HepG2 (cell line): ENCODE measurements at regions of chr11 and their contacts with region 1.

Region 1: GRCh38 chr11:68206187-68206601 is 6.9 kb downstream of the KMT5B start:
- DNase-seq: peak; percentile 74
- ATAC-seq: peak; percentile 36
- H3K4me3 ChIP-seq: no peak overlapping the region
- H3K27ac ChIP-seq: no peak overlapping the region
- H3K4me1 ChIP-seq: peaks cover 79% of the 10 kb centered on the region
- H3K27me3 ChIP-seq: no peaks in the 10 kb centered on the region
- CTCF ChIP-seq: peak; percentile 82
- EP300 ChIP-seq: no peak
- POLR2A ChIP-seq: no peak
- RAD21 ChIP-seq: 0 out of 2 replicates have a peak, but pooled peaks have one; percentile 25

Region 2: GRCh38 chr11:68076371-68077042 is 129.7 kb before region 1 on chr11:
- CTCF ChIA-PET with region 1: interaction called, 5 read pairs
- POLR2A ChIA-PET with region 1: no interaction called
- in situ Hi-C with region 1: loop called (anchors 10 kb)
- intact Hi-C with region 1: loop called (anchors 5 kb)
- DNase-seq: peak; percentile 33
- ATAC-seq: peak; percentile 69
- H3K4me3 ChIP-seq: no peak overlapping the region
- H3K27ac ChIP-seq: no peak overlapping the region
- H3K4me1 ChIP-seq: peaks cover 35% of the 10 kb centered on the region
- H3K27me3 ChIP-seq: no peaks in the 10 kb centered on the region
- CTCF ChIP-seq: peak; percentile 80
- EP300 ChIP-seq: no peak
- POLR2A ChIP-seq: no peak
- RAD21 ChIP-seq: peak; percentile 48

Region 3: GRCh38 chr11:68106165-68106957 is 99.8 kb before region 1 on chr11:
- CTCF ChIA-PET with region 1: no interaction called
- POLR2A ChIA-PET with region 1: interaction called, 3 read pairs
- in situ Hi-C with region 1: no loop called
- intact Hi-C with region 1: loop called (anchors 1 kb)
- DNase-seq: peak; percentile 61
- ATAC-seq: peak; percentile 67
- H3K4me3 ChIP-seq: peak overlapping the region in 1 of 3 experiments; percentile 14; a peak in 2 of 6 replicates
- H3K27ac ChIP-seq: peak overlapping the region; percentile 79
- H3K4me1 ChIP-seq: peaks cover 99% of the 10 kb centered on the region
- H3K27me3 ChIP-seq: no peaks in the 10 kb centered on the region
- CTCF ChIP-seq: 0 out of 2 replicates have a peak, but pooled peaks have one; percentile 4
- EP300 ChIP-seq: no peak; a peak in 1 of 4 replicates
- POLR2A ChIP-seq: no peak
- RAD21 ChIP-seq: no peak

Region 4: GRCh38 chr11:68173926-68174325 is 32.3 kb before region 1 on chr11:
- CTCF ChIA-PET with region 1: no interaction called
- POLR2A ChIA-PET with region 1: no interaction called
- in situ Hi-C with region 1: no loop called
- intact Hi-C with region 1: no loop called
- DNase-seq: no peak
- ATAC-seq: no peak
- H3K4me3 ChIP-seq: no peak overlapping the region
- H3K27ac ChIP-seq: no peak overlapping the region
- H3K4me1 ChIP-seq: peaks cover 3% of the 10 kb centered on the region; the same call in 1 of the 2 replicates
- H3K27me3 ChIP-seq: no peaks in the 10 kb centered on the region
- CTCF ChIP-seq: no peak
- EP300 ChIP-seq: no peak
- POLR2A ChIP-seq: no peak
- RAD21 ChIP-seq: no peak